Activated CD4-positive, alpha-beta memory T cell treated with anti-CD3 and anti-CD28 coated beads for 36 hours (primary cell): ENCODE measurements at regions of chr10 and their contacts with region 1.

Region 1: GRCh38 chr10:3043512-3044368 is 23.6 kb upstream of the PFKP start:
- DNase-seq: peak; percentile 69
- H3K4me3 Mint-ChIP-seq: no peak overlapping the region
- H3K27ac Mint-ChIP-seq: no peak overlapping the region
- H3K4me1 Mint-ChIP-seq: peaks cover 6% of the 10 kb centered on the region
- H3K27me3 Mint-ChIP-seq: peaks cover 16% of the 10 kb centered on the region

Region 2: GRCh38 chr10:2839081-2839725 is 204.5 kb before region 1 on chr10:
- CTCF ChIA-PET with region 1: interaction called, 24 read pairs
- POLR2A ChIA-PET with region 1: no interaction called
- intact Hi-C with region 1: loop called (anchors 5 kb)
- DNase-seq: peak; percentile 47
- H3K4me3 Mint-ChIP-seq: no peak overlapping the region
- H3K27ac Mint-ChIP-seq: no peak overlapping the region
- H3K4me1 Mint-ChIP-seq: no peaks in the 10 kb centered on the region
- H3K27me3 Mint-ChIP-seq: peaks cover 22% of the 10 kb centered on the region

Region 3: GRCh38 chr10:2938869-2939268 is 104.9 kb before region 1 on chr10:
- CTCF ChIA-PET with region 1: interaction called, 19 read pairs
- POLR2A ChIA-PET with region 1: no interaction called
- intact Hi-C with region 1: no loop called
- DNase-seq: no peak
- H3K4me3 Mint-ChIP-seq: no peak overlapping the region
- H3K27ac Mint-ChIP-seq: no peak overlapping the region
- H3K4me1 Mint-ChIP-seq: no peaks in the 10 kb centered on the region
- H3K27me3 Mint-ChIP-seq: peaks cover 43% of the 10 kb centered on the region

Region 4: GRCh38 chr10:2978111-2978510 is 65.6 kb before region 1 on chr10:
- CTCF ChIA-PET with region 1: interaction called, 11 read pairs
- POLR2A ChIA-PET with region 1: no interaction called
- intact Hi-C with region 1: no loop called
- DNase-seq: no peak
- H3K4me3 Mint-ChIP-seq: no peak overlapping the region
- H3K27ac Mint-ChIP-seq: no peak overlapping the region
- H3K4me1 Mint-ChIP-seq: no peaks in the 10 kb centered on the region
- H3K27me3 Mint-ChIP-seq: peaks cover 1% of the 10 kb centered on the region